A549 (cell line): ENCODE measurements at regions of chr10 and their contacts with region 1.

Region 1: GRCh38 chr10:69092959-69093850 is 5.3 kb downstream of the SRGN start:
- DNase-seq: peak; percentile 72 to 89
- ATAC-seq: peak; percentile 87 to 91
- H3K4me3 ChIP-seq: no peak overlapping the region
- H3K27ac ChIP-seq: 0 out of 6 replicates have a peak overlapping the region, but pooled peaks of 1 of the 2 experiments have one; percentile 25
- H3K4me1 ChIP-seq: 0 out of 3 replicates have a peak, but pooled peaks cover 5% of the 10 kb centered on the region
- CTCF ChIP-seq: peak; percentile 93
- EP300 ChIP-seq: no peak
- POLR2A ChIP-seq: no peak
- RAD21 ChIP-seq: peak; percentile 89 to 92

Region 2: DNA sequence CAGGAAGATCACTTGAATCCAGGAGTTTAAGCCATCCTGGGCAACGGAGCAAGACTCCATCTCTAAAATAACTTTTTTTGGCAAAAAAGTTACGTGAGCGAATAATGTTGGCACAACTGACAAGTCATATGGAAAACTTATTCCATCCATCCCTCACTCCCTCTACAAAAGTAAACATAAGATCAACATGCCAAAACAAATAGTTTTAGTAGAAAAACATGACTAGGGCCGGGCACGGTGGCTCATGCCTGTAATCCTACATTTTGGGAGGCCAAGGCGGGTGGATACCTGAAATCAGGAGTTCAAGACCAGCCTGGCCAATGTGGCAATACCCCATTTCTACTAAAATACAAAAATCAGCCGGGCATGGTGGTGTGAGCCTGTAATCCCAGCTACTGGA is 591.5 kb before region 1 on chr10:
- CTCF ChIA-PET with region 1: no interaction called
- POLR2A ChIA-PET with region 1: no interaction called
- DNase-seq: no peak
- ATAC-seq: no peak
- H3K4me3 ChIP-seq: no peak overlapping the region
- H3K27ac ChIP-seq: no peak overlapping the region
- H3K4me1 ChIP-seq: no peaks in the 10 kb centered on the region
- CTCF ChIP-seq: no peak
- EP300 ChIP-seq: no peak
- POLR2A ChIP-seq: no peak
- RAD21 ChIP-seq: no peak

Region 3: DNA sequence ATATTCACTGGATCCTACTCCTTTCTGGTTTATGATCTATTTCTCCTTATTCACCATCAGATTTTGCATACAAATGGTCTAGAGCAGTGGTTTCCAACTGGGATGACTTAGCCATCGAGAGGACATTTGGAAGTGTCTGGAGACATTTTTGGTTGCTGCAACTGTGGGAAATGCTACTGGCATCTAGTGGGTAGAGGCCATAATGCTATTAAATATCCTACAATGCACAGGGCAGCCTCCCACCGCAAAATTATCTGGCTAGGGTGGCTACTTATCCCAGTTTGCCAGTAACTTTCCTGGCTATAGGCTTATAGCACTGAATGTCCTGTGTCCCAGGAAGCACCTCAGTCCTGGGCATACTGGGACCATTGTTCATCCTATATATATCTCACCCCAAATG is 213.6 kb before region 1 on chr10:
- CTCF ChIA-PET with region 1: no interaction called
- POLR2A ChIA-PET with region 1: no interaction called
- DNase-seq: no peak
- ATAC-seq: peak; percentile 54 to 57; a peak in 4 of 6 replicates
- H3K4me3 ChIP-seq: no peak overlapping the region
- H3K27ac ChIP-seq: no peak overlapping the region
- H3K4me1 ChIP-seq: 0 out of 3 replicates have a peak, but pooled peaks cover 6% of the 10 kb centered on the region
- CTCF ChIP-seq: no peak
- EP300 ChIP-seq: no peak
- POLR2A ChIP-seq: no peak
- RAD21 ChIP-seq: no peak

Region 4: DNA sequence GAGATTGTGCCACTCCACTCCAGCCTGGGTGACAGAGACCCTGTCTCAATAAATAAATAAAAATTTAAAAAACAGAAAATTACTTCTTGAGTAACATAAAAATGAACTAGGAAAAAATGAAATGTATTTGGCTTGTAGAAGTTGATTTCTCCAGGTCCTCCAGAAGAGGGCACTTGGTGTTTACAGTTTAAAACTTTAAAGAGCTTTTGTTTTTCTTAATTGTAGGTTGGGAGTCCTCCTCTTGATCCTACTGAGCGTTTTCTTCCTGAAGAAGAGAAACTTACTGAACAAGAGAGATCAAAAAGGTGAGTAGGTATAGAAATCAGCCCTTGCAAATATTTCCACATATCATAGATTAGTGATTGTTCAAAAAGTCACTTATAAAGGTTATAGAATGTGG is 88.4 kb before region 1 on chr10:
- CTCF ChIA-PET with region 1: interaction called, 122 read pairs
- POLR2A ChIA-PET with region 1: no interaction called
- DNase-seq: peak; percentile 35 to 47
- ATAC-seq: peak in 1 of 2 experiments; percentile 42; a peak in 1 of 6 replicates
- H3K4me3 ChIP-seq: no peak overlapping the region
- H3K27ac ChIP-seq: no peak overlapping the region
- H3K4me1 ChIP-seq: no peaks in the 10 kb centered on the region
- CTCF ChIP-seq: peak; percentile 83
- EP300 ChIP-seq: no peak
- POLR2A ChIP-seq: no peak
- RAD21 ChIP-seq: peak; percentile 69 to 81

Region 5: GRCh38 chr10:69051303-69051702 is 41.9 kb before region 1 on chr10:
- CTCF ChIA-PET with region 1: interaction called, 13 read pairs
- POLR2A ChIA-PET with region 1: no interaction called
- DNase-seq: no peak
- ATAC-seq: no peak
- H3K4me3 ChIP-seq: no peak overlapping the region
- H3K27ac ChIP-seq: no peak overlapping the region
- H3K4me1 ChIP-seq: no peaks in the 10 kb centered on the region; the same call in 2 of the 3 replicates
- CTCF ChIP-seq: no peak
- EP300 ChIP-seq: no peak
- POLR2A ChIP-seq: no peak
- RAD21 ChIP-seq: no peak

Region 6: DNA sequence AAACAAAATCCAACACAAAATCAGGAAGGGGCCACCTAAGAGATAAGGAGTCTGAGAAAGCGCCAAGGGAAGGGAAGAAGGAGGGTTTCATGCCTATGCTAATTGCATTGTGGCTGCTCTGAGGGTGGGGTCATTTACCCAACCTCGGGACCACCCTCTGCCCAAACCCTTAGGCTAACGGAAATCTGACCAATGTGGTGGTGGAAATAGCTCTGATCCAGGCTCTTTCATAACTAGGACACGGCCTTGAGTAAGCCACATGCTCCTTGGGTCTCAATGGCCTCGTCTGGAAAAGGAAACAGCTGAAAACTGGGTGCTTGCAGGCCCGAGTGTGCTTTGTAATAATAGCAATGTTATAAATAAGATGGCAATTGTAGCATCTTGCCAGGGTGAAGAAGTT is 20.2 kb before region 1 on chr10:
- CTCF ChIA-PET with region 1: interaction called, 10 read pairs
- POLR2A ChIA-PET with region 1: no interaction called
- DNase-seq: no peak
- ATAC-seq: no peak
- H3K4me3 ChIP-seq: no peak overlapping the region
- H3K27ac ChIP-seq: no peak overlapping the region
- H3K4me1 ChIP-seq: no peaks in the 10 kb centered on the region
- CTCF ChIP-seq: no peak
- EP300 ChIP-seq: no peak
- POLR2A ChIP-seq: no peak
- RAD21 ChIP-seq: no peak

Region 7: DNA sequence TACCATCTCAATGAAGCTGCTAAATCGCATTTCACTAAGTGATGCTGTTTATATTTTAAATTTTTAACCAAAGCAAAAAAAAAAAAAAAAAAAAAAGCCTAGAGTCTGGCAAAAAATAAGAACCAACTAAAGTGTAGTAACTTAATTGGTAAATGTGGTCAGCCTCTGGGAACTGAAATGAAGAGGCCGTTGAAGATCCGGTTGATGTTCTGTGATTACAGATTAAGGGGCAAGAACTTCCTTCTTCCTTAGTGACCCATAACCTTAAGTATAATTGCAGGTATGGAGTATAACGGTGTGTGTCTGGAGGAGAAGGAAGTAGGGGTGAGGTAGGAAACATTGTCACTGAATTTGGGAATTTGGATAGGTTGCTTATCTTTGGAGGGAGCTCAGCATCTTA is 13.0 kb before region 1 on chr10:
- CTCF ChIA-PET with region 1: interaction called, 13 read pairs
- POLR2A ChIA-PET with region 1: no interaction called
- DNase-seq: no peak
- ATAC-seq: no peak
- H3K4me3 ChIP-seq: no peak overlapping the region
- H3K27ac ChIP-seq: no peak overlapping the region
- H3K4me1 ChIP-seq: no peaks in the 10 kb centered on the region
- CTCF ChIP-seq: no peak
- EP300 ChIP-seq: no peak
- POLR2A ChIP-seq: no peak
- RAD21 ChIP-seq: no peak

Region 8: GRCh38 chr10:69327463-69328379 is 234.5 kb after region 1 on chr10:
- CTCF ChIA-PET with region 1: no interaction called
- POLR2A ChIA-PET with region 1: no interaction called
- DNase-seq: no peak
- ATAC-seq: no peak
- H3K4me3 ChIP-seq: no peak overlapping the region
- H3K27ac ChIP-seq: no peak overlapping the region
- H3K4me1 ChIP-seq: peaks cover 8% of the 10 kb centered on the region; the same call in 2 of the 3 replicates
- CTCF ChIP-seq: no peak
- EP300 ChIP-seq: no peak
- POLR2A ChIP-seq: no peak
- RAD21 ChIP-seq: no peak